Common myeloid progenitor, CD34-positive (primary cell): ENCODE measurements at regions of chr12 and their contacts with region 1.

Region 1: GRCh38 chr12:101773650-101774162 is 34.4 kb upstream of the SYCP3 start:
- DNase-seq: peak; percentile 77 to 92 (median 91)
- H3K4me3 ChIP-seq: no peak overlapping the region
- H3K27ac ChIP-seq: no peak overlapping the region
- H3K4me1 ChIP-seq: peaks cover 40 to 69% (median 60%) of the 10 kb centered on the region in 4 experiments
- H3K27me3 ChIP-seq: no peaks in the 10 kb centered on the region

Region 2: DNA sequence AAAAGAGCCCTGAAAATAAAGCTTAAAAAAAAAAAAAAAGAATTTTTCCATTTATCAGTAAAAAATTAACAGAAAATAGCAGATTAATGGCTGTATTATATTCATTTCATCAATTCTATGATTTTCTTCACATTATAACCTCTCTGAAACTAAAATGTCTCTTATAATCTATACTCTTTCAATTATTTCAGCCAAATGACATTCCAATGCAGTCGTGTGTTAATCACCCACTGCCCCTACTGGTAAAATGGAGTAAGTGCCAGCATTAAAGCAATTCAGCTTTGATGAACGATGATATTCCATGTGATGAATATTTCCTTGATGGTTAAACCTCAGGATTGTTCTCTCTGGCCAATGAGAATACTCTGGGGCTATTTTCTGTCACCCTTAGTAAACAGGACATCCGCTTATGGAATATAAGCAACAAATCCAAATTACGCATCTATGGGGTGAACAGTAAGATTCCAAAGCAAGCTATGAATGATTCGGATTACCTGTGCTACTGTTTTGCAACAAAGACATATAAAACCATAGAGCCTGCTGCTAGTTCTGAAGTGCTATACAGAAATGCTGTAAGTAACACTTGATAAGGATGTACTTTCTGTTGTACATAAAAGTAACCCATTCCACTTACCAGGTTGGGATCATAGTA is 14.2 kb before region 1 on chr12:
- CTCF ChIA-PET with region 1: interaction called, 19 read pairs
- POLR2A ChIA-PET with region 1: no interaction called
- DNase-seq: peak in 2 of 3 donors; percentile 63 to 64
- H3K4me3 ChIP-seq: no peak overlapping the region
- H3K27ac ChIP-seq: no peak overlapping the region
- H3K4me1 ChIP-seq: peaks cover 0 to 9% (median 6%) of the 10 kb centered on the region in 4 experiments
- H3K27me3 ChIP-seq: no peaks in the 10 kb centered on the region

Region 3: DNA sequence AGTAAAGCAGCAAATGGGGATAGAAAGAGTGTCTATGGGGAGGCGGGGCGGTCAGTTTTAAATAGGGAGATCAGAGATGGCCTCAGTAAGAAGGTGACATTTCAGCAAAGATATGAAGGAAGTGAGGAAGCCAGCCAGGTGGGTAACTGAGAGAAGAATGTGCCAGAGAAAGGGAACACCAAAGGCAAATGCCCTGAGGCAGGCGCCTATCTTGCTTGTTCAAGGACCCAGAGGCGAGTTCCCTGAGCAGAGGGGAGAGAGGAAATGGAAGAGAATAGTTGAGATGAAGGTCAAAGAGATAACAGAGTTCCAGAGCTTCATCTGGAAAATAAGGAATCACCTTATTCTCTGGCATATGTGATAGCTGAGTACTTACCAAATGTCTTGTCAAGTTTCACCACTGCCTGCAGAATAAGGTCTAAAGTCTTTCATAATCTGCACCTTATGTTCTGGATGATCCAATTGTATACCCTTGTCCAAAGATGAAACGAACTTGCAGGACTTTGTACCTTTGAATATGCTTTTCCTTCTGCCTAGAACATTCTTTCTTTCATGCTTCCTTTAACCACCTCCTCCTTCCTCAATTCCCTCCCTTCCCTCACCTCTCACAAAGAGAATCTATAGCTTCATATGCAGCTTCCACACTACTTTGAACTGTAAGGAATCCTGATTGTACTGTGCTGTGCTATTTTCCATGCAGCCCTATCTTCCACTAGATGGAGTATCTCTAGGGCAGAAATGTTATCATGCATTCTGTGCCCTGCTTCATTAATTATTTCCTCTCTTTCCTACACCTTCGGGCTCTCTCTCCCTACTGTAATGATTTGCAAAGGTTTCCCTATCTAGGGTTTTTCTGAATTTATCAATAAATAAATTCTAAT is 18.6 kb after region 1 on chr12:
- CTCF ChIA-PET with region 1: interaction called, 18 read pairs
- POLR2A ChIA-PET with region 1: no interaction called
- DNase-seq: no peak
- H3K4me3 ChIP-seq: no peak overlapping the region
- H3K27ac ChIP-seq: no peak overlapping the region
- H3K4me1 ChIP-seq: peaks cover 0 to 53% (median 5%) of the 10 kb centered on the region in 4 experiments
- H3K27me3 ChIP-seq: no peaks in the 10 kb centered on the region

Region 4: GRCh38 chr12:101823891-101824290 is 50.2 kb after region 1 on chr12:
- CTCF ChIA-PET with region 1: interaction called, 132 read pairs
- POLR2A ChIA-PET with region 1: no interaction called
- DNase-seq: peak; percentile 86 to 95 (median 93)
- H3K4me3 ChIP-seq: no peak overlapping the region
- H3K27ac ChIP-seq: peak overlapping the region in 1 of 2 experiments; percentile 29
- H3K4me1 ChIP-seq: peaks cover 11 to 63% (median 46%) of the 10 kb centered on the region in 4 experiments
- H3K27me3 ChIP-seq: no peaks in the 10 kb centered on the region

Region 5: DNA sequence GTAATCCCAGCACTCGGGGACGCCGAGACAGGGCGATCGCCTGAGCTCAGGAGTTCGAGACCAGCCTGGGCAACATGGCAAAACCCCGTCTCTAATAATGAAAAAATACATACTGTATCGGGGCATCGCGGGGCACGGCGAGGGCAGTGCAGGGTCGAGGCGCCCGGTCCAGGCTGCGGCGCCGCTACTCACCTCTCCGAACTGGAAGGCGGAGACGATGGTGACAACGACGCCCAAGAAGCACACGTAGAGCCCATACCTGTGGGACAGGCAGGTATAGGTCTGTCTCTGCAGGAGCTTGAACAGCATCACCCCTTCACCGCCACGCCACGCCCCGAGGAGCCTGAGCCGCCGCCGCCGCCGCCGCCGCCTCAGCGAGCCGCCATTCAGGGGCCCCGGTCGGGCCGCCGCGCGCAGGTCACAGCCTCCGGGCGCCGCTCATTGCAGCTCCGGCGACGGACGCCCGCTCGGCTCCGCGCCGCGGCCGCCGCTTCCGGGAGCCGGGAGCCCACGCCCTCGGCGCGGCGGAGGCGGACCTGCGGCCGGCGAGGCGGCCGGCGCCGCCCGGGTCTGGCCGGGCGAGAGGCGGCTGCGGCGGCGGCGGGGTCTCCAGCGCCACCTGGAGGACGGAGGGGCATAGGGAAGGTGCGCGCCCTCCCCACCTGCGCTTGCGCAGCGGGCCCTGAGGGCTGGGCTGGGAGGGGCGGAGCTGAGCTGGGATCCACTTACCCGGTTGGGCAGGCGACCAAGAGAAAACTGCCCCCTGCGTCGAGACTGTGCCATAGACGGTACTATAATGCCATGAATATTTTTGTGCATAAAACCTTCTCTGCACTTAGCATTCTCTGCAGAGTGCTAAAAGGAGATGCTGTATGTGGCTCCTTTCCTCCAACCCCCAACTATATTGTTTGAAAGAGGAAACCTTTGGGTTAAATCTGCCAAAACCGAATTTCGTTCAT is 56.9 kb after region 1 on chr12 and contains the start of gene GNPTAB:
- CTCF ChIA-PET with region 1: interaction called, 132 read pairs
- POLR2A ChIA-PET with region 1: interaction called, 4 read pairs
- DNase-seq: peak; percentile 93 to 97 (median 96)
- H3K4me3 ChIP-seq: peak within 1 kb of the TSS; percentile 88 to 100 (median 91)
- H3K27ac ChIP-seq: peak within 1 kb of the TSS; percentile 15 to 76
- H3K4me1 ChIP-seq: peaks cover 28 to 48% (median 38%) of the 10 kb centered on the region in 4 experiments
- H3K27me3 ChIP-seq: no peaks in the 10 kb centered on the region

Region 6: DNA sequence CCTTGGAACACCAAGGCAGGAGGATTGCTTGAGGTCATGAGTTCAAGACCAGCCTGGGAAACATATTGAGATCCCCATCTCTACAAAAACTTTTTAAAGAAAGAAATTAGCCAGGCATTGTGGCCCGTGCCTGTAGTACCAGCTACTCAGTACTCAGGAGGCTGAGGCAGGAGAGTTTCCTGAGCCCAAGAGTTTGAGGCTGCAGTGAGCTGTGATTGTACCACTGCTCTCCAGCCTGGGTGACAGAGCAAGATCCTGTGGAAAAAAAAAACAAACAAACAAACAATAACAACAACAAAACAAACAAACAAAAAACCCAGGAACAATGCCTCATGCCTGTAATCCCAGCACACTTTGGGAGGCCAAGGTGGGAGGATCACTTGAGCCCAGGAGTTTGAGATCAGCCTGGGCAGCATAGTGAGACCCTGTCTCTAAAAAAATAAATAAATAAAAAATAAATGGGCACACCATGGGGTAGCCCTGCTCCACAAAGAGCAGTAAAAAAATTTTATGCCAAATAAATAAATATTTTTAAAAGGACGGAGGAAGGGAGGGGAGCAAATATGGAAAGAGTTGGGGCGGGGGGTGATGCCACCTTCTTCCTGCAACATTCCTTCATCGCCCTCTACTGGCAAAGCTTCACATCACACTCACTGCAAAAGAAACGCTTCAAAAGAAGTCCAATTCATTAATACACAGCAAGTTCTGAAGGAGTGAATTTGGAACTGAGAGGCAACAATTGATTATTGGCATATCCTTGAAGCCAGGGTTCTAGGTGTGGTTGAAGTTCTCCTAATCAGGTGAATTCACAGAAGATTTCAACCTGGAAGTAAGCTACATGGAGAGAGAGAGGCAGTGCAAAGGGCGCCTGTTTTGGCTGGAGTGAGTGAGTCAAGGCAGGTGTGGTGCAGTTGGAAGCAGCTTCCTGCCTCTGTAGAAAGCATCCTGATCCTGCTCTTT is 65.9 kb after region 1 on chr12:
- CTCF ChIA-PET with region 1: interaction called, 46 read pairs
- POLR2A ChIA-PET with region 1: interaction called, 3 read pairs
- DNase-seq: peak; percentile 78 to 87 (median 82)
- H3K4me3 ChIP-seq: peak overlapping the region in 1 of 7 experiments; percentile 16
- H3K27ac ChIP-seq: no peak overlapping the region
- H3K4me1 ChIP-seq: peaks cover 4 to 17% (median 8%) of the 10 kb centered on the region in 4 experiments
- H3K27me3 ChIP-seq: no peaks in the 10 kb centered on the region